ENCODE measurements at regions of chr1 and their contacts with region 1.

Region 1: GRCh38 chr1:16080422-16081150 is 7.1 kb upstream of the FAM131C start:
- DNase-seq: no peak
- ATAC-seq: no peak
- H3K4me3 ChIP-seq: no peak overlapping the region
- H3K27ac ChIP-seq: no peak overlapping the region
- H3K4me1 ChIP-seq: peaks cover 11% of the 10 kb centered on the region
- H3K27me3 ChIP-seq: no peaks in the 10 kb centered on the region
- CTCF ChIP-seq: no peak

Region 2: DNA sequence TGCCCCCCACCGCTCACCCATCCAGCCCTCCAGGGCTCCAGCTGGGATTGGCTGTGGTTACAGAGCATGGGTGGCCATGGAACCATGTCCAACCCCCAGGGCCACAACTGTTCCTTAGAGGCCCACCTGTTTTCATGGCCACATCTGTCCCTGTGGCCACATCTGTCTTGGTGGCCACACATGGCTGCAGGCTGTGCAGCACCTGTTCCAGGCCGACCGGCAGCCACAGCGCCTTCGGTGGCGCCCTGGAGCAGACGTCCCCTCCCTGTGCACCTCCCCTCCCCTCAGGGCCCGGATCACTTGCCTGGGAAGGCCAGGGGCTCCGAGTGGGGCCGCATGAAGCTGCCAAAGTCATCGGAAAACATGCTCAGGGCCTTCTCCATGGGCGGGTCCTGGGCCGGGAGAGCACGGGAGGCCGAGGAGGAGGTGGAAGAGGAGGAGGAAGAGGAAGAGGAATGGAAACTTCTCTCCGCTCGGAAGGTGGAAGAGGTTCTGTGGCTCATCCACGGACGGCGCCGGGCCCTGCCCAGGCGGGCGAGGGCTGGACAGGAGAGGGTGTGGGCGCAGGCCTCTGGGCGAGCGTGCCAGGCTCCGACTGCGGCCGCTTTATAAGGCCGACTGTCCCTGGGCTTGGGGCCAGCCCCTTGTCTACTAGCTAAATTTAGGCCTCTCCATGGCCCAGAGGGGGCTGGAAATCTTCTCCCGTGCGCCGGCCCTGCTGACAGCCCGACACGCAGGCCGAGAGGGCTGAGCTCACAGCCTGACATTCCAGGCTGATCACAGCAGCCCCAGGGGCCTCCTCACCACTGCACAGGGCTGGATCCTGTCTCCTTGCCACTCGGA is 62.9 kb before region 1 on chr1 and contains the start of gene HSPB7:
- intact Hi-C with region 1: no loop called
- DNase-seq: peak; percentile 77
- ATAC-seq: peak; percentile 55
- H3K4me3 ChIP-seq: peak within 1 kb of the TSS; percentile 33
- H3K27ac ChIP-seq: peak within 1 kb of the TSS; percentile 78
- H3K4me1 ChIP-seq: peaks cover 23% of the 10 kb centered on the region
- H3K27me3 ChIP-seq: no peaks in the 10 kb centered on the region
- CTCF ChIP-seq: no peak
- total RNA-seq, gene HSPB7: 10.7 TPM

Region 3: DNA sequence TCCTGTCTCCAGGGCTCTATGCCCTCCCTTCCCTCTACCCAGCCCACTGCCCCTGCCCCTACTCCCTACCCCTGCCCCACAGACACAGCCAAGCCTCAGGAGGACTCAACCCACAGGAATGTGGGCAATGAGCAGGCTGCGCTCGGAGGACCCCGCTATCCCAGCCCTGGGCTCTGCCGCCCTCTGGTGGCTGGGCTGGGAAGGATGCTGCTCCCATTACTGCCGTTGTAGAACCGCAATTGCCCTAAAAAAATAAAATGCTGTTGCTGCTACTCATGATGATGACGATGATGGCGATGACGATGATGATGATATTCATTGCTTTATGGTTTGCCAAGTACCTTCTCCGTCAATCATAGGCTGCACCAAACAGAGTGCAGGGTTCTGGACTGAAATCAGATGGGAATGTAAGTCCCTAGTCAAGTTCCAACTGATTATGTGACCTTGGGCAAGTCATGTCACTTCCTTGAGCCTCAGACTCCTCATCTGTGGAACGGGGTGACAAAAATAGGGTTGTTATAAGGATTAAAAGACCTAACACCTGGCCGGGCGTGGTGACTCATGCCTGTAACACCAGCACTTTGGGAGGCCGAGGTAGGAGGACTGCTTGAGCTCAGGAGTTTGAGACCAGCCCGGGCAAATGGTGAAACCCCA is 107.3 kb after region 1 on chr1:
- intact Hi-C with region 1: loop called (anchors 2 kb)
- DNase-seq: peak; percentile 87
- ATAC-seq: peak; percentile 86
- H3K4me3 ChIP-seq: no peak overlapping the region
- H3K27ac ChIP-seq: no peak overlapping the region
- H3K4me1 ChIP-seq: peaks cover 10% of the 10 kb centered on the region
- H3K27me3 ChIP-seq: no peaks in the 10 kb centered on the region
- CTCF ChIP-seq: peak; percentile 93